ENCODE measurements at regions of chr1 and their contacts with region 1.

Region 1: GRCh38 chr1:119506951-119507350 is at the start of gene HSD3B1:
- DNase-seq: no peak
- H3K4me3 ChIP-seq: no peak within 1 kb of the TSS
- H3K27ac ChIP-seq: no peak within 1 kb of the TSS
- H3K4me1 ChIP-seq: no peaks in the 10 kb centered on the region
- H3K27me3 ChIP-seq: peaks cover 23% of the 10 kb centered on the region
- CTCF ChIP-seq: no peak
- total RNA-seq, gene HSD3B1: not detected in 2 replicates

Region 2: GRCh38 chr1:118504221-118504644 is 1002.7 kb before region 1 on chr1:
- CTCF ChIA-PET with region 1: no interaction called
- POLR2A ChIA-PET with region 1: no interaction called
- intact Hi-C with region 1: no loop called
- DNase-seq: peak; percentile 43
- H3K4me3 ChIP-seq: no peak overlapping the region
- H3K27ac ChIP-seq: no peak overlapping the region
- H3K4me1 ChIP-seq: peaks cover 8% of the 10 kb centered on the region
- H3K27me3 ChIP-seq: no peaks in the 10 kb centered on the region
- CTCF ChIP-seq: no peak

Region 3: GRCh38 chr1:119209596-119210295 is 297.2 kb before region 1 on chr1:
- CTCF ChIA-PET with region 1: no interaction called
- POLR2A ChIA-PET with region 1: no interaction called
- intact Hi-C with region 1: no loop called
- DNase-seq: peak; percentile 15
- H3K4me3 ChIP-seq: no peak overlapping the region
- H3K27ac ChIP-seq: no peak overlapping the region
- H3K4me1 ChIP-seq: no peaks in the 10 kb centered on the region
- H3K27me3 ChIP-seq: no peaks in the 10 kb centered on the region
- CTCF ChIP-seq: no peak

Region 4: DNA sequence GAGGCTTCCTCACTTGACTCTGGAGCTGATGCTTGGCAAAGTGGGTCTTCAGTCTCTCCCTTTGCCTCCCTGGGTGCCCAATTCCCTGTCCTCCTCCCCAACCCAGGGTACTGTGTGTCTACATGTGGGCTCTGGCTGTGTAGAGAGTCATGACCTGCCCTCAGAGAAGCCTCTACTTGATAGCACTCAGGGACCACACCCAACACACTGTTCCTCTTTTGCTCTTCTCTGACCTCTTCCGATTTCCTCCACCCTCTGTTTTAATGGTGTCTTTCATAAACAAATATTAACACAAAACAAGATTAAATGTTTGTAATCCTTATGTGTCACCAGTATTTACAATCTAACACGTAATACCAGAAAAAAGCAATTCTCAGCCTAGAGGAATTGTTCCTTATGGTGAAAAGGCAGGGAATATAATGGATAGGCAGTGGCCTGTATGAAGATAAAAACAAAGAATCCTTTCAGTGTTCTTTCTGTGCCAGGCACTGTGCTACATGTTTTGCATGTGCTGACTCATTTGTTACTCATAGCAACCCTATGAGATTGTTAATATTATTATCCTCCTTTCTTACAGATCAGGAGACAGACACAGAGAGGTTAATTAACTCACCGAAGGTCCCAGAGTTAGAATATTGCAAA is 58.3 kb after region 1 on chr1:
- CTCF ChIA-PET with region 1: no interaction called
- POLR2A ChIA-PET with region 1: no interaction called
- intact Hi-C with region 1: loop called (anchors 10 kb)
- DNase-seq: no peak
- H3K4me3 ChIP-seq: no peak overlapping the region
- H3K27ac ChIP-seq: no peak overlapping the region
- H3K4me1 ChIP-seq: no peaks in the 10 kb centered on the region
- H3K27me3 ChIP-seq: no peaks in the 10 kb centered on the region
- CTCF ChIP-seq: no peak

Measured in A673 (cell line).